Endothelial cell of umbilical vein (primary cell): ENCODE measurements at regions of chr19 and their contacts with region 1.

Region 1: DNA sequence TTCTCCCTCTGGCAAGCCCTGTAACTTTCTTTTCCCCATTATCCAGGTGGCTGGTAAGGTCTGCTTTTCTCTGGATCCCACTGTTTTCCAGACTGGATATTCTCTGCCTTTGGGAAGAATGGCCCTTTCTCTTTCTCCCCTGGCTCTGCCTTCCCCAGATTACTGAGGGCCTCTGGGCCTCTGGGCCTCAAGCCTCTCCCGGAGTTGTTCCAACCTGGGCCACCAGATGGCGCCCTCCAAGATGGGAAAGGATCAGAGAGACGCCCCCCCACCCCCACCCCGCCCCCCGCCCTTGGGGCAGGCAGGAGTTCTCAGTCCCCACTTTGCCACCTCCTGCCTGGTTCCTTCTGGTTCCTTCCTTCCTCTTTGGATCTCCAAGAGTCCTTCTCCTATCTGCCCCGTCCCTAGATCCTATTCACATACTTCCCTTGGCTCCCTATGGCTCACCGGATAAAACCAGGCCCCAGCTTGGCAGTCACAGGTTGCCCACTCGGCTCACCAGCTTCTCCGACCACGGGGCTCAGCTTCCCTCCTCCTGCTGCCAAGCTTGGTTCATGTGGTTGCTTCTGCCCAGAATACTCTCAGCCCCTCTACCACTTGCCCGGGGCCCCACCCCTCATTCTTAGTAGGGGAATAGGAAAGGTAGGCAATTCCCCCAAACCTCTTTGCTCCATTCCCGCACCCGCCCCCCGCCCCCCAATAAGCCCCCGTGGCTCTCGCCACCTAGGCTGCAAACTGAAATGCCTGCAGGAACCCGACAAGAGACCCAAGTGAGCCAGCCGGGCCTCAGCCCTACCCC is 13.1 kb downstream of the EPS8L1 start:
- DNase-seq: peak; percentile 70
- H3K4me3 ChIP-seq: peak overlapping the region in 2 of 3 experiments; percentile 55 to 77
- H3K27ac ChIP-seq: peak overlapping the region; percentile 67
- H3K4me1 ChIP-seq: peaks cover 18% of the 10 kb centered on the region
- H3K27me3 ChIP-seq: no peaks in the 10 kb centered on the region
- CTCF ChIP-seq: peak; percentile 38 to 72
- POLR2A ChIP-seq: no peak

Region 2: GRCh38 chr19:54882758-54883157 is 206.0 kb before region 1 on chr19:
- CTCF ChIA-PET with region 1: interaction called, 3 read pairs
- POLR2A ChIA-PET with region 1: no interaction called
- dilution Hi-C with region 1: no loop called
- intact Hi-C with region 1: loop called (anchors 5 kb)
- DNase-seq: peak; percentile 9
- H3K4me3 ChIP-seq: no peak overlapping the region
- H3K27ac ChIP-seq: no peak overlapping the region
- H3K4me1 ChIP-seq: no peaks in the 10 kb centered on the region
- H3K27me3 ChIP-seq: no peaks in the 10 kb centered on the region
- CTCF ChIP-seq: no peak
- POLR2A ChIP-seq: no peak

Region 3: GRCh38 chr19:55041617-55042349 is 47.0 kb before region 1 on chr19:
- CTCF ChIA-PET with region 1: no interaction called
- POLR2A ChIA-PET with region 1: no interaction called
- dilution Hi-C with region 1: no loop called
- intact Hi-C with region 1: no loop called
- DNase-seq: peak; percentile 74
- H3K4me3 ChIP-seq: peak overlapping the region in 1 of 3 experiments; percentile 27
- H3K27ac ChIP-seq: peak overlapping the region; percentile 55
- H3K4me1 ChIP-seq: peaks cover 19% of the 10 kb centered on the region
- H3K27me3 ChIP-seq: no peaks in the 10 kb centered on the region
- CTCF ChIP-seq: no peak
- POLR2A ChIP-seq: peak; percentile 44

Region 4: DNA sequence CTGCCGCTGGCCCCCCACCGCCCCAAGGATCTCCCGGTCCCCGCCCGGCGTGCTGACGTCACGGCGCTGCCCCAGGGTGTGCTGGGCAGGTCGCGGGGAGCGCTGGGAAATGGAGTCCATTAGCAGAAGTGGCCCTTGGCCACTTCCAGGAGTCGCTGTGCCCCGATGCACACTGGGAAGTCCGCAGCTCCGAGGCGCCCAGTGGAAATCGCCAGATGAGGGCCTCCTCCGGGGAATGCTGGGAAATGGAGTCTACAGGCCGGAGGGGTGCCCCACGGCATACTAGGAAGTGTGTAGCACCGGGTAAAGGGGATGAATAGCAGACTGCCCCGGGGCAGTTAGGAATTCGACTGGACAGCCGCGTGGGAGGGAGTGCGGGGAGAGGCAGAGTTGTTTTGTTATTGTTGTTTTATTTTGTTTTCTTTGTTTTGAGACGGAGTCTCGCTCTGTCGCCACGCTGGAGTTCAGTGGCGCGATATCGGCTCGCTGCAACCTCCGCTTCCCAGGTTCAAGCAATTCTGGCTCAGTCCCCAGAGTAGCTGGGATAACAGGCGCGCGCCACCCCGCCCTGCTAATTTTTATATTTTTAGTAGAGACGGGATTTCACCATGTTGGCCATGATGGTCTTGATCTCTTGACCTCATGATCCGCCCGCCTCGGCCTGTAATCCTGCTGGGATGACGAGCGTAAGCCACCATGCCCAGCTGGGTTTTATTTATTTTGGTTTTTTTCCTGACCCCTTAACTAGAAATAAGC is 29.1 kb after region 1 on chr19 and contains the start of gene PPP1R12C:
- CTCF ChIA-PET with region 1: interaction called, 38 read pairs
- POLR2A ChIA-PET with region 1: interaction called, 4 read pairs
- dilution Hi-C with region 1: no loop called
- intact Hi-C with region 1: loop called (anchors 1 kb)
- DNase-seq: peak; percentile 98
- H3K4me3 ChIP-seq: peak within 1 kb of the TSS; percentile 30 to 92 (median 75)
- H3K27ac ChIP-seq: peak within 1 kb of the TSS; percentile 59
- H3K4me1 ChIP-seq: peaks cover 20% of the 10 kb centered on the region
- H3K27me3 ChIP-seq: no peaks in the 10 kb centered on the region
- CTCF ChIP-seq: no peak
- POLR2A ChIP-seq: peak; percentile 79
- total RNA-seq, gene PPP1R12C: 137 and 149 TPM in 2 replicates

Region 5: DNA sequence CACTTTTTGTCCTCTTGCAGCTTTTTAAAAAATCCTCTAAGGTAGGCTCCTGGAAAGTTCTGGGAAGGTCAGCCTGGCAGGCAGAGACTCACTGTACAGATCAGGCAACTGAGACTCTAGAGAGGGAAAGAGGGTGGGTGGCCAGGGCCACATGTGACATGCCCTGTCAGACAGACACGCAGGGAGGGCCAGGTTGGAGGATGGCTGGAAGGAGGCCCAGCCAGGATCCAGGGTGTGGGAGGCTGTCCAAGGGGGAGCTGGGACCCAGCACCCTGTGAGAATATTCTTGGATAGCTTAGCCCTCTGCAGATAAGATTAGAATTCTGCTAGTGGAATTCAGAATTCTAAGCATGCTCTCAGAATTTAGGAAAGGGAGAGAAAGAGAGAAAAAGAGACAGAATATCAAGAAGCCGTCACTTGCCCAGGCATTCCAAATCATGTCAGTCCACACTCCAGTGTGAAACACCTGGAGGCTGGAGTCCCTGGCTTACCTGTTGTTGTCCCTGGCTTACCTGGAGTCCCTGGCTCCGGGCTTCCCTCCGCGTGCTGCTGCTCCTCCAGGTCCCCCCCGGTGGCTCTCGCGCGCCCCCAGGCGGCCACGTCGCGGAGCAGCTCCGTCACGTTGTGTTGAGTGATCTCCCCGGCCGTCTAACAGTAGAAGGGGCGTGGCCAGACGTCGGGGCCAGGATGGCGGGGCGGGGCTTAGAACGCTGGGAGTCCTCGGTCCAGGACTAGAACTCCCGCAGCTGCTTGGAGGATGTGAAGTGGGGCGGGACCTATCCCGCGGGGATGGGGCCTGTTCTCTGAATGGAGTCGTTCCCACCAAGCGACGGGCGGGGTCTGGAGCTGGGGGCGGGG is 71.6 kb after region 1 on chr19:
- CTCF ChIA-PET with region 1: interaction called, 17 read pairs
- POLR2A ChIA-PET with region 1: no interaction called
- dilution Hi-C with region 1: no loop called
- intact Hi-C with region 1: loop called (anchors 1 kb)
- DNase-seq: peak; percentile 85
- H3K4me3 ChIP-seq: no peak overlapping the region
- H3K27ac ChIP-seq: no peak overlapping the region
- H3K4me1 ChIP-seq: no peaks in the 10 kb centered on the region
- H3K27me3 ChIP-seq: peaks cover 14 to 16% of the 10 kb centered on the region in 2 experiments
- CTCF ChIP-seq: peak; percentile 97 to 98
- POLR2A ChIP-seq: no peak

Region 6: GRCh38 chr19:55643348-55644176 is 554.8 kb after region 1 on chr19 and contains the start of gene ZNF581:
- CTCF ChIA-PET with region 1: no interaction called
- POLR2A ChIA-PET with region 1: no interaction called
- dilution Hi-C with region 1: no loop called
- intact Hi-C with region 1: loop called (anchors 5 kb)
- DNase-seq: peak; percentile 68
- H3K4me3 ChIP-seq: peak within 1 kb of the TSS; percentile 60 to 75 (median 61)
- H3K27ac ChIP-seq: no peak within 1 kb of the TSS
- H3K4me1 ChIP-seq: peaks cover 32% of the 10 kb centered on the region
- H3K27me3 ChIP-seq: no peaks in the 10 kb centered on the region
- CTCF ChIP-seq: no peak
- POLR2A ChIP-seq: no peak
- total RNA-seq, gene ZNF581: 27.8 and 31.4 TPM in 2 replicates